ENCODE measurements at regions of chr1 and their contacts with region 1.

Region 1: DNA sequence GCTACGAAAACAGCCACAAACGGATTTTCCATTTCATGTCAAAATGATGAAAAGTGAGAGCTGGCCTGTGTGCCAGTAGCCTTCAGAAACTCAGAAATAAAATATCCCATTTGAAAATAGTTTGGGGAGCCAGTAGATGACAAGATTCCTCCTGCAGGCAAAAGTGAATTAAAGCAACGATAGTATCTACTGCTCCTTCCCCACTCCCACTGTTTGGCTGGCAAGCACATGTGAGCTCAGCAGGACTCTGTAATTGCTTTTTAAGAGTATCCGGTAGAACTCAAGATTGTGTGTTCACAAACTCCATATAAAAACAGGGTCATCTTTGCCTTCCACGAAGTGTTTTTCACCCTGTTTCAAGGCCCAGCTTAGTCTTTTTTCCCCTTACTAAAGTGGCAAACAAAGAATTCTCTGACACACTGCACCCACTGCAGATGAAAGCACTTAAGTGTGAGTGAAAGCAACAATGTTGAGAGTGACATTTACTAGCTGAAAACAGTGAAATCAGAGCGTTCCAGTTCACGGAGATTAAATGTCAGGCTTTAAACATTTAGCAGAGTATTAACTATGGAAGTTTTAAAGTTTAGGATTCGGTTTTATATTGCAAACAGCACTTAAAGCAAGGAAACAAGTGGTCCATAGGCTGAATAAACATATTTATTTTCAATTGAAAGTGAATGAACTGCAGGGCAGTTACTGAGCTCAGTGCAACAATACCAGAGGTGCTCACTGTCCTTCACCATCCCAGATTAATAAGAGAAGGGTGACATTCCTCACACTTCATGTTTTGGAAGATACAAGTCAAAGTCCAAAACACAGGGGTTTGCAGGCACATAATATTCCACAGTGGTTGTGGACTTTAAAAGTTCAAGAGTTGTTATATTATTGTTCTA is 70.0 kb downstream of the ALG14 start:
- DNase-seq: peak; percentile 51
- H3K4me3 ChIP-seq: no peak overlapping the region
- H3K27ac ChIP-seq: no peak overlapping the region
- H3K4me1 ChIP-seq: peaks cover 13% of the 10 kb centered on the region
- H3K27me3 ChIP-seq: no peaks in the 10 kb centered on the region
- CTCF ChIP-seq: no peak
- POLR2A ChIP-seq: no peak

Region 2: GRCh38 chr1:95013950-95014574 is 11.3 kb after region 1 on chr1:
- CTCF ChIA-PET with region 1: interaction called, 7 read pairs
- POLR2A ChIA-PET with region 1: no interaction called
- dilution Hi-C with region 1: no loop called
- intact Hi-C with region 1: loop called (anchors 1 kb)
- DNase-seq: peak; percentile 86
- H3K4me3 ChIP-seq: no peak overlapping the region
- H3K27ac ChIP-seq: peak overlapping the region; percentile 55
- H3K4me1 ChIP-seq: peaks cover 13% of the 10 kb centered on the region
- H3K27me3 ChIP-seq: no peaks in the 10 kb centered on the region
- CTCF ChIP-seq: no peak
- POLR2A ChIP-seq: no peak